AG04450 (cell line): ENCODE measurements at regions of chr5 and their contacts with region 1.

Region 1: DNA sequence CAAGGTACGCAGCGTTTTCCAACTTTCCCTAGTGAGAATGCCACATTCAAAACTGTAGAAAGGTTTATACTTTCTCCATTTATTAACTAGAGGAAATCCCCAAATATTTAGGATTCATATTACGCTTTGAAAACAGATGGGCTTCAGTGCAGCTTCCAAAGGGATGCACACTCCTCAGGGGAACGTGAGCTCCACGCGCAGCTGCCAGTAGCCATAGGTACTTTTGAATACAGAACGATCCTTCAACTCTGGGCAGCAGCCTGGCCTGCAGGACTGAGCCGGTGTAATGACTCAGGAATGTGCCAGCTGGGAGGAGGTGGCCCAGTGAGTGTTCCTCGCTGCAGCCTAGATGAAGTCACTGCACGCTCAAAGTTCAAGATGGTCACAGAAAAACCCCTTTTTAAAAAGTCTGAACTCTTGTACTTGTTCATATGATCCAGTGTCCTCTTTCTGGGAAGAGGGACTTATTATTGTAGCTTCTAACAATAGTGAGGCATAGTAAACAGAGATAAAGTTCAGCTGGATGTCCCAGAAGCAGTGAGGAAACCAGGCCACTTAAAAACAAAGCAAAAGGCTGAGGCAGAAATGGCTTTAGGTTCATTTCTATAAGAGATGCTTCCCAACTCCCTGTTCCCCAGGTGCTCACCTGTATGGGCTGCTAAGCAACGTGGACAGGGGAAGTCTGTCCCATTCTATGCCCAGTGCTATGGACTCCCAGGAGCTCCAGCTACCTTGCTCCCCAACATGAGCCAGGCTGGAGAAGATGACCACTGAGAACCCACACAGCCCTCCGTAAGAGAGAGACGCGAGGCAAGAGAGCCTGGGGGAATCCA is 130.0 kb downstream of the LHFPL2 start:
- DNase-seq: peak; percentile 77
- H3K4me3 ChIP-seq: no peak overlapping the region
- H3K27ac ChIP-seq: peak overlapping the region; percentile 96
- H3K27me3 ChIP-seq: no peaks in the 10 kb centered on the region
- CTCF ChIP-seq: no peak

Region 2: DNA sequence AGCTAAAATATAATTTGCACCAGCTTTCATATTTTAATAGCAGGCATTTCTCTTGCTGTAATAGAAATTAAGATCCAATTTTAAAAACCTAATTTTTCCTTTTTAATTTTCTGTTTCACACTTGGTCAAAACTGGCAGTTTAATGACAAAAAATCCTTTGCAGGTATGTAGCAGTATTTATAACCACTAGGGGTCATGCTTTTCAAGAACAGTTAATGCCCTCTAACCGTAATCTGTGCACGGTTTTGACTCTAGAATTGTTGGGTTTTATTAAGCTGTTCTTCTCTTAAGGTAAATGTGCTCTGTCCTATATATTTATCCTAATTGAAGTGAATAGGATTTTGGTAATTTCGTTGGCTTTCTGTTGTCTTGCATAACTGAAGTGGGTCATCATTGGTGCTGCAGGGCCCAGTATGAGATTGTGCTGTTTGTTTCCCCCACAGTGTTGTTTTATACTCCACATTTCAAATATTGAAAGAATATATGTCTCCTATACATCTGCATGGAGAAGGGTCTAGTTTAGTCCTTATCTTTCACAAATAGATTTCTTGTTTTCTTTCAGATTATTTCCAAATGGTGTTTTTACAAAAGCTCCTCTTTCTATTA is 50.7 kb before region 1 on chr5:
- CTCF ChIA-PET with region 1: no interaction called
- POLR2A ChIA-PET with region 1: no interaction called
- DNase-seq: peak; percentile 18
- H3K4me3 ChIP-seq: no peak overlapping the region
- H3K27ac ChIP-seq: no peak overlapping the region
- H3K27me3 ChIP-seq: no peaks in the 10 kb centered on the region
- CTCF ChIP-seq: peak; percentile 77

Region 3: DNA sequence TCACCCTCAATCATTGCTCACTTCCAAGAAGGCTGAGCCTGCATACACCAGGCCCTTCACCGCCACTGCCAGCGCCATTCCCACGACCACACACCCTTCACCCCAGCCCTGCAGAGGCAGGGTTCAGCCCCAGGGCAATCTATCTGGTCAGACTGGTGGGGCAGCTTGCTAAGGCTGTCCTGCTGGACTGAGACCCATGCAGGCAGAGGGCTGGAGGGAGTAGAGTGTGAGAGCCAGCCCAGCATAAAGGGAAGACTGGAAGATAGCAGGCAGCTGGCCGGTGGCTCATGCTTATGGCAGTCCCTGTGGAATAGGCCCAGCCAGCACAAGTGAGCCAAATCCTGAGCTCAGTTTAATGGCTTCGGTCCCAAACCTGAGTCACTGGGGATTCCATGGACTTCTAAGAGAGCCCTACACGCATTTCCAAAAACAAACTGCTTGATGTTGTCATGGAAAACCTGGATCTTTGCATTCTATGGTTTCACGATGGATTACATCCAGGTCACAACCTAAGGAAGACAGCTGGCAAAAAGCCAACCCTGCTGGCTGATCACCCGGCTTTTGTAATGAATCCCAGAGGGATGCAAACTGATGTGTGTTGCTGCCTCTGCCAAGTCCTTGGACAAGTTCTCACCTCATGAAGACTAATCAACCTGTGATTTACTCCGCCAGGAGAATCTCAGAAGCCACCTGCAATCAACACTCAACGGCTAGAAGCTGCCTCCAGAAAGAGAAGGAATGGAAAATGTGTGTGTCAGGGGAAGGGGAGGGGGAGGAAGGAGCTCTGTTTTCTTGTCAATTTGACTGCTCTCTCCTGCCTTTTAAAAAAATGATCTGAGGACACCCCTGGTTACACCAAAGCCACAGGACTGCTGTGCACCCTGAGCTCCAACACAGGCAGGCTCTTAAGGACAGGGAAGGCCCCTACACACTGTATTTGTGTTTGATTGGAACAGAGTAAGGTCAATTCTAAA is 13.6 kb before region 1 on chr5:
- CTCF ChIA-PET with region 1: interaction called, 3 read pairs
- POLR2A ChIA-PET with region 1: interaction called, 13 read pairs
- DNase-seq: peak; percentile 99
- H3K4me3 ChIP-seq: no peak overlapping the region
- H3K27ac ChIP-seq: peak overlapping the region; percentile 93
- H3K27me3 ChIP-seq: no peaks in the 10 kb centered on the region
- CTCF ChIP-seq: no peak